ENCODE measurements at regions of chr4 and their contacts with region 1.

Region 1: GRCh38 chr4:65126200-65126599 is 544.1 kb downstream of the EPHA5 start:
- DNase-seq: no peak
- H3K4me3 Mint-ChIP-seq: no peak overlapping the region
- H3K27ac Mint-ChIP-seq: no peak overlapping the region
- H3K4me1 Mint-ChIP-seq: no peaks in the 10 kb centered on the region
- H3K27me3 Mint-ChIP-seq: no peaks in the 10 kb centered on the region

Region 2: GRCh38 chr4:65193985-65194384 is 67.8 kb after region 1 on chr4:
- intact Hi-C with region 1: loop called (anchors 10 kb)
- DNase-seq: no peak
- H3K4me3 Mint-ChIP-seq: no peak overlapping the region
- H3K27ac Mint-ChIP-seq: no peak overlapping the region
- H3K4me1 Mint-ChIP-seq: no peaks in the 10 kb centered on the region
- H3K27me3 Mint-ChIP-seq: no peaks in the 10 kb centered on the region

Measured in activated T-helper 1 cell treated with anti-CD3 and anti-CD28 coated beads, Interleukin-12 subunit alpha, Interleukin-12 subunit beta, Interleukin-2, Interleukin-4 antibody, amounts not matched to agents 30 ng/mL and 10 ng/mL and 1 ng/mL, durations not matched to agents 14 hours and 24 hours and 36 hours (primary cell).